Posterior vena cava (tissue), 2 donors: ENCODE measurements at regions of chr9 and their contacts with region 1.

Region 1: GRCh38 chr9:34337404-34337803 is 8.0 kb downstream of the NUDT2 start:
- DNase-seq: no peak

Region 2: DNA sequence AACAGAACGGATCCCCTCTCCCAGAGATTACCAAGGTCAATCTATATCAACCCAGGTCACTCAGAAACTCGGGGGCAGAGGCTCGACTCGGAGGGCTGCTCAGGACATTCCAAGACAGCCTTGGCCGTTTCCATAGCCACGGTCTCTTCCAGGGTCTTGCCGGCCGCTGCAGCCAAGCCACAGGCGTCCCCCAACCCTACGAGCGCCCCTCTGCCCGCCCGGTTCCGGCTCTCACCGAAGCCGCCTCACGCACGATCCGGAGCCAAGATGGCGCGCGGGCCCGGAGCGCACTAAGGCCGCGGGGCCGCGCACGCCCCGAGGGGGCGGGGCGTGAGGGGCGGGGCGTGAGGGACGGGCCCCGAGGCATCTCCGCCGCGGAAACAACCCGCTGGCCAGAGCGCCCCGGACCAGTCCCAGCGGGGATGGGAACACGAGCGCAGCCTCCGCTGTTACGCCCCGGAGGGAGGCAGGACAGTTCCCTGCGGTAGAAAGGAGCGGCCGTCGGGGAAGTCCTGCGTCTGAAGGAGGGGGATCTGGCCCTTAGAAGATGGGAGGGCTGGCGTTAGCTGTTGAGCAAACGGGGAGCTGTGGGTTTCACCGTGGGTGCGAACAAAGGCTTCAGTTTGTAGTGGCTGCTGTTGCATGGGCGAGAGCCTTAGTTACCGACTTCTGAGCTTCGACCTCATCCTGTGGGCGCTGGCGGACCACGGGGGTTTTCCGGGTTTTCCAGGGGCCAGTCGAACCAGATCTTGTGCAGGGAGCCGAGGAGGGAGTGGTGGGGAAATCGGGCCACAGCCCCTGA is 274.6 kb after region 1 on chr9 and contains the start of gene RPP25L:
- intact Hi-C with region 1: loop called in 1 of 2 experiments (anchors 5 kb)
- DNase-seq: peak; percentile 95
- total RNA-seq, gene RPP25L: 5.1 to 10.8 TPM